Body of pancreas (tissue), 4 donors: ENCODE measurements at regions of chr4 and their contacts with region 1.

Region 1: GRCh38 chr4:80370635-80371034 is 35.1 kb downstream of the CFAP299 start:
- DNase-seq: no peak
- ATAC-seq: no peak
- H3K4me3 ChIP-seq: no peak overlapping the region
- H3K27ac ChIP-seq: no peak overlapping the region
- H3K4me1 ChIP-seq: no peaks in the 10 kb centered on the region
- H3K27me3 ChIP-seq: no peaks in the 10 kb centered on the region
- CTCF ChIP-seq: no peak
- POLR2A ChIP-seq: no peak

Region 2: DNA sequence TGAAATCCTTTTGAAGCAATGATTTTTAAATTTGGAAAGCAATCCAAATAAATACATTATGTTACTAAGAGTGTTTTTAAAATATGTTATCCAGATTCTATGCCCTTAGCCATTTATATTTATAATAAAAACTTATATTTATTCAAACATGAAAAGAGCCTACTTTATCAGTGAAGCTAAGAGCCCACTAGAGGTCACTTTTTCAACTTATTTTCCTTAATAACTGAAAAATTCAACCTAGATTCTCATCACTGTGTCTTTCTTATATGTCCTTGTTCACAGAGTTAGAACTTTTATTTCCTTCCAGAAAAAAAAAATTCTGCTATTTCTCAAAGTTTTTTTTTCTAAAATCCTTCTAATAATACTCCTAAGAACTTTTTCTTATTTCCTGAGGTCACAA is 149.5 kb before region 1 on chr4:
- intact Hi-C with region 1: no loop called
- DNase-seq: no peak
- ATAC-seq: no peak
- H3K4me3 ChIP-seq: no peak overlapping the region
- H3K27ac ChIP-seq: no peak overlapping the region
- H3K4me1 ChIP-seq: no peaks in the 10 kb centered on the region
- H3K27me3 ChIP-seq: no peaks in the 10 kb centered on the region
- CTCF ChIP-seq: peak in 1 of 7 experiments; percentile 4
- POLR2A ChIP-seq: no peak

Region 3: GRCh38 chr4:80989921-80990544 is 619.4 kb after region 1 on chr4:
- intact Hi-C with region 1: loop called (anchors 10 kb)
- DNase-seq: peak in 2 of 4 donors; percentile 20 to 36
- ATAC-seq: peak; percentile 66
- H3K4me3 ChIP-seq: no peak overlapping the region
- H3K27ac ChIP-seq: no peak overlapping the region
- H3K4me1 ChIP-seq: no peaks in the 10 kb centered on the region
- H3K27me3 ChIP-seq: no peaks in the 10 kb centered on the region
- CTCF ChIP-seq: peak; percentile 24 to 63 (median 55)
- POLR2A ChIP-seq: no peak